Caco-2 (cell line): ENCODE measurements at regions of chr9 and their contacts with region 1.

Region 1: DNA sequence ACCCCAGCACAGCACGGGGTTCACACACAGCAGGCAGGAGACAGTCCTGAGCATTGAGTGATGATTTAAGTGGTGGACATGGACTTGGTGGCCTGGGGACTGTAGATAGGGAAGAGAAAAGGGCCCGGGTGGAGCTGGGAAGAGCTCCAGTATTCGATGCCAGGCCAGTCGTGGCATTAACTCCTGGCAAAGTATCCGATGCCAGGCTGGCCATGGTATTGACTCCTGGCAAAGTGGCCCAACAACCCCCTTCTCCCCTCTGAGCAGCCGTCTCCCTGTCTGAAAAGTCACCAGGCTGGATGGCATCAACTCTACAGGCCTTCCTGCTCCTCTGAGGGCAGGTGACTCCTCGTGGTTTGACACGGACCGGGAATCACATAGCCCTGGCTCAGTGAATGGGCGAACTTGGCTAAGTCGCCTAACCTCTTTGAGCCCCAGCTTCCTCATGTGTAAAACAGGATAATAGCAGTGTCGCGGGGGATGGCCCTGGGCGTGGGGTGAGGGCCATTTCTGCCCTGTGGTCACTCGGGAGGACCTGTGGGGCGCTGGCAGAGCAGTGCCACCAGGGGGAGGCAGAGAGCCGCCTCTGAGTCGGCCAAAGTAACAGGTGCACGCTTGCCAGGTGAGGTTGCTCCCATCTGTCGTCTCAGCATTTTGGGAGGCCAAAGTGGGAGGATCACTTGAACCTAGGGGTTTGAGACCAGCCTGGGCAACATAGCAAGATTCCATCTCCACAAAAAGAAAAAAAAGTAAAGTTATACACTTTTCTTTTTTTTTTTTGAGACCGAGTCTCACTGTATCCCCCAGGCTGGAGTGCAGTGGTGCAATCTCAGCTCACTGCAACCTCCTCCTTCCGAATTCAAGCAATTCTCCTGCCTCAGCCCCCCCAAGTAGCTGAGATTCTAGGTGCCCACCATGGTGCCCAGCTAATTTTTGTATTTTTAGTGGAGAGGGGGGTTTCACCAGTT is 5.7 kb upstream of the SEC16A start:
- DNase-seq: peak; percentile 73 to 87
- H3K4me3 ChIP-seq: no peak overlapping the region
- H3K4me3 Mint-ChIP-seq: no peak overlapping the region
- H3K27ac Mint-ChIP-seq: no peak overlapping the region
- H3K4me1 ChIP-seq: peaks cover 8% of the 10 kb centered on the region
- H3K4me1 Mint-ChIP-seq: no peaks in the 10 kb centered on the region
- H3K27me3 ChIP-seq: no peaks in the 10 kb centered on the region
- H3K27me3 Mint-ChIP-seq: no peaks in the 10 kb centered on the region
- CTCF ChIP-seq: peak; percentile 95

Region 2: DNA sequence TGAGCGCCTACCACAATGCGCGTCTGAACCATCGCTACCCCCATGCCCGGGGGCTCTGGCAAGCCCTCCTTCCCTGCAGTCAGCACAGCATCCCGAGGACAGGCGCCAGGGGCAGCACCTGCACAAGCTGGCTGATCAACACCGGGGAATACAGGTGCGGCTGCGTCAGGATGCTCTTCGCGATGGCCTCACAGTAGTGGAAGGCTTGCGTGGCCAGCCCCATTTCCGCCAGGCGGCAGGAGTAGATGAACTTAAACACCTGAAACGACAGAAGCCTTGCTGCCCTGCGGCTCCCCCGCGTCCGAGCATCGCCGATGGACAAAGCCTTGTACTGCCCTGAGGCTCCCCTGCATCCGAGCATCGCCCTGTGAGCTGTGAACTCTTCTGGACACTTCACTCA is 31.2 kb before region 1 on chr9:
- CTCF ChIA-PET with region 1: interaction called, 10 read pairs
- POLR2A ChIA-PET with region 1: no interaction called
- intact Hi-C with region 1: no loop called
- DNase-seq: no peak
- H3K4me3 ChIP-seq: no peak overlapping the region
- H3K4me3 Mint-ChIP-seq: no peak overlapping the region
- H3K27ac Mint-ChIP-seq: no peak overlapping the region
- H3K4me1 ChIP-seq: no peaks in the 10 kb centered on the region
- H3K4me1 Mint-ChIP-seq: no peaks in the 10 kb centered on the region
- H3K27me3 ChIP-seq: no peaks in the 10 kb centered on the region
- H3K27me3 Mint-ChIP-seq: no peaks in the 10 kb centered on the region
- CTCF ChIP-seq: no peak

Region 3: GRCh38 chr9:136631038-136632000 is 142.8 kb after region 1 on chr9:
- CTCF ChIA-PET with region 1: interaction called, 140 read pairs
- POLR2A ChIA-PET with region 1: interaction called, 9 read pairs
- intact Hi-C with region 1: loop called (anchors 1 kb)
- DNase-seq: peak; percentile 81 to 85
- H3K4me3 ChIP-seq: no peak overlapping the region
- H3K4me3 Mint-ChIP-seq: no peak overlapping the region
- H3K27ac Mint-ChIP-seq: no peak overlapping the region
- H3K4me1 ChIP-seq: peaks cover 16% of the 10 kb centered on the region
- H3K4me1 Mint-ChIP-seq: peaks cover 5% of the 10 kb centered on the region
- H3K27me3 ChIP-seq: no peaks in the 10 kb centered on the region
- H3K27me3 Mint-ChIP-seq: peaks cover 14% of the 10 kb centered on the region
- CTCF ChIP-seq: peak; percentile 79 to 84